HEK293 (cell line): ENCODE measurements at regions of chrX and their contacts with region 1.

Region 1: GRCh38 chrX:69618803-69619202 is 2.9 kb downstream of the EDA start:
- H3K4me3 ChIP-seq: no peak overlapping the region
- H3K27ac ChIP-seq: no peak overlapping the region
- H3K4me1 ChIP-seq: peaks cover 3% of the 10 kb centered on the region; the same call in 1 of the 2 replicates
- CTCF ChIP-seq: peak; percentile 13; the same call in 1 of the 2 replicates

Region 2: GRCh38 chrX:69387567-69388487 is 231.0 kb before region 1 on chrX:
- CTCF ChIA-PET with region 1: no interaction called
- POLR2A ChIA-PET with region 1: no interaction called
- H3K4me3 ChIP-seq: no peak overlapping the region
- H3K27ac ChIP-seq: no peak overlapping the region
- H3K4me1 ChIP-seq: no peaks in the 10 kb centered on the region
- CTCF ChIP-seq: peak; percentile 87

Region 3: GRCh38 chrX:69493193-69493592 is 125.6 kb before region 1 on chrX:
- CTCF ChIA-PET with region 1: interaction called, 13 read pairs
- POLR2A ChIA-PET with region 1: no interaction called
- H3K4me3 ChIP-seq: no peak overlapping the region
- H3K27ac ChIP-seq: no peak overlapping the region
- H3K4me1 ChIP-seq: no peaks in the 10 kb centered on the region
- CTCF ChIP-seq: peak; percentile 49

Region 4: DNA sequence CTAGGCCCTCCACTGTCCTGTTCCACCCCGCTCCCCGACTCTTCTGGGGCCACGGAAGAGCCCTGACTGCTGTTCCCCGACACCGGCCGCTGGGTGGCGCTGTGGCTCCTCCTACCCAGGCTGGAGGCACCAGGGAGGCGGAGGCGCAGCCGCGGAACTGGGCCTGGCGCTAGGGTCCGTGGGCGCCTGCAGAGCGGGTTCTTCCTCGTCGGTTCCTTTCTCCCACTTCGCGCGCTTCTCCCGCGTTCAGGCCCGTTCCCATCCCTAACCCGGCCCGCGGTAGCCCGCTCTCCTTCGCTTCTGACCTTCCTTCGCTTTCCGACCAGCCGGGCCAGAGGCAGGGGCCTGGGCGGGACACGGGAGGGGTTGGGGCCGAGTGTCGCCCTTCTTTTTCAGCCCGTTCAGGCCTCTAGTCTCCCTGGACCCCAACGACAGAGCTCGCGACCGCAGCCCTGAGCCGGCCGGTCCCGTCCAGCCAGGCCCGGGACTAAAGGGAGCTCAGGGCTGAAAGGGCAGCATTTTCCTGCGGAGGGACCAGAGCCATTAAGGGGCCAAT is 80.4 kb before region 1 on chrX:
- CTCF ChIA-PET with region 1: interaction called, 38 read pairs
- POLR2A ChIA-PET with region 1: no interaction called
- H3K4me3 ChIP-seq: peak overlapping the region; percentile 15
- H3K27ac ChIP-seq: 0 out of 2 replicates have a peak overlapping the region, but pooled peaks have one; percentile 39
- H3K4me1 ChIP-seq: no peaks in the 10 kb centered on the region; the same call in 1 of the 2 replicates
- CTCF ChIP-seq: peak; percentile 94

Region 5: DNA sequence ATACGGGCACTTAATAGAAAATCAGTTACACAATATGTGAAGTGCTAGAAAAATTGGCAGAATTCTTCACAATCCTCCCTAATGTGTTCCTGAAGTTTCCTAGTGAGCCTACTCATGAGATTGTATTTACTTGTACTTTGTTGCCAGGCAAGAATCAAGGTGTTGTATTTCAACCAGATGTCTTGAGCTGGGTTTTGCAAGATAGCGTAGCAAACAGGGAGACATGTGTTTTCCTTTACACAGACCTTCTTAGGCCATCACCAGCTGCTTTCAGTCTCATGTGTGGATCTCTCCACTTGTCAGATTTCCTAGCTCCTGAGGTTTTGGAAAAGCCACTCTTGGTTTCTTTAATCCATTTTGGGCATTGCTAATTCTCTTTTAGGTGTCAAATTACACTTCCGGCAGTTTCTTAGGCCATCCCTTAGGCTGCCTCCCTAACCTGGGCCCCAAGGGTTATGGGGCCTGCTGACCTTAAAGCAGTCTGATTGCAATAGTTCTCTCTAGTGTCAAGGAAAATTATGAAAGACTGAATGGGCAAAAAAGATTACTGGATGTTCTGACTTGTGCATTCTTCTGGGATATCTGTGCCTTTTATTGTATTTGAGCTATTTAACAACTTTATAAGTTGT is 15.1 kb before region 1 on chrX:
- CTCF ChIA-PET with region 1: interaction called, 12 read pairs
- POLR2A ChIA-PET with region 1: no interaction called
- H3K4me3 ChIP-seq: no peak overlapping the region
- H3K27ac ChIP-seq: no peak overlapping the region
- H3K4me1 ChIP-seq: no peaks in the 10 kb centered on the region
- CTCF ChIP-seq: no peak